ENCODE measurements at regions of chr16 and their contacts with region 1.

Region 1: DNA sequence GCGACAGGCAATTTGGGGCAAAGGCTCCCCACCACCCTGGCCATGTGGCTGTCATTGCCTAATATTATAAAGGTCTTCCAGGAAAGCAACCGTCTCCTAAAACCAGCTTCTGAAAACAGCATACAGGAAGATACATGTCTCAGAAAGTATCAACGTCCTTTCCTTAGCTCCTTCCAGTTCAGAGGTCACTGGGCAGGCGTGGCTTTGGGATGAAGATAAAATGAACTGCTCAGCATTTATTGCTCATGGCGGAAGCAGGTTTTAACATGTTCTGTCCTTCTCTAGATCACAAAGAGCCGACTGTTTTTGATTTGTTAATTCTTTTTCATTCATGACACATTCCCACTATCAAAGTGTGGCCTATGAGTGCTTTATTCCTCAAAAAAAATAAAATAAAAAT is 8.0 kb downstream of the CFAP20 start:
- DNase-seq: no peak
- H3K4me3 Mint-ChIP-seq: no peak overlapping the region
- H3K27ac Mint-ChIP-seq: no peak overlapping the region
- H3K4me1 Mint-ChIP-seq: peaks cover 56% of the 10 kb centered on the region
- H3K27me3 Mint-ChIP-seq: no peaks in the 10 kb centered on the region
- CTCF ChIP-seq: no peak

Region 2: GRCh38 chr16:57966133-57966805 is 154.9 kb before region 1 on chr16:
- CTCF ChIA-PET with region 1: no interaction called
- intact Hi-C with region 1: no loop called
- DNase-seq: no peak
- H3K4me3 Mint-ChIP-seq: no peak overlapping the region
- H3K27ac Mint-ChIP-seq: no peak overlapping the region
- H3K4me1 Mint-ChIP-seq: no peaks in the 10 kb centered on the region
- H3K27me3 Mint-ChIP-seq: peaks cover 63% of the 10 kb centered on the region
- CTCF ChIP-seq: no peak

Region 3: DNA sequence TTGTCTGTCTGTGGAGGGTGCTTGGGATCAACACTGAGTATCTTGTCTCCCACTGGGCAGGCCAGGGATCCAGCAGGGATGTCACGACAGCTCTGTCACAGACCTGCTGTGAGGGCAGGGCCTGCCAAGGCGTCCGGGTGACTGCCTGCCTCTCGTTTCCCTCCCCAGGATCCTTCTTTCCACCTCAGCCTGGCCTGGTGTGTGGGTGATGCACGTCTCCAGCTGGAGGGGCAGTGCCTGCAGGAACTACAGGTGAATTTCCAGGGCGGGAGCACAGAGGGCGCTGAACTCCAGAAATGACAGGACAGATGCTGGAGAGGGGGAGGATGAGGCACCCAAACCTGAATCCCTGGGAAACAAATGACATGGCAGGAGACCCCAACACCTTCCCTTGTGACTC is 102.3 kb before region 1 on chr16:
- CTCF ChIA-PET with region 1: interaction called, 41 read pairs
- intact Hi-C with region 1: loop called (anchors 1 kb)
- DNase-seq: no peak
- H3K4me3 Mint-ChIP-seq: no peak overlapping the region
- H3K27ac Mint-ChIP-seq: no peak overlapping the region
- H3K4me1 Mint-ChIP-seq: peaks cover 23% of the 10 kb centered on the region
- H3K27me3 Mint-ChIP-seq: no peaks in the 10 kb centered on the region
- CTCF ChIP-seq: peak; percentile 11

Region 4: DNA sequence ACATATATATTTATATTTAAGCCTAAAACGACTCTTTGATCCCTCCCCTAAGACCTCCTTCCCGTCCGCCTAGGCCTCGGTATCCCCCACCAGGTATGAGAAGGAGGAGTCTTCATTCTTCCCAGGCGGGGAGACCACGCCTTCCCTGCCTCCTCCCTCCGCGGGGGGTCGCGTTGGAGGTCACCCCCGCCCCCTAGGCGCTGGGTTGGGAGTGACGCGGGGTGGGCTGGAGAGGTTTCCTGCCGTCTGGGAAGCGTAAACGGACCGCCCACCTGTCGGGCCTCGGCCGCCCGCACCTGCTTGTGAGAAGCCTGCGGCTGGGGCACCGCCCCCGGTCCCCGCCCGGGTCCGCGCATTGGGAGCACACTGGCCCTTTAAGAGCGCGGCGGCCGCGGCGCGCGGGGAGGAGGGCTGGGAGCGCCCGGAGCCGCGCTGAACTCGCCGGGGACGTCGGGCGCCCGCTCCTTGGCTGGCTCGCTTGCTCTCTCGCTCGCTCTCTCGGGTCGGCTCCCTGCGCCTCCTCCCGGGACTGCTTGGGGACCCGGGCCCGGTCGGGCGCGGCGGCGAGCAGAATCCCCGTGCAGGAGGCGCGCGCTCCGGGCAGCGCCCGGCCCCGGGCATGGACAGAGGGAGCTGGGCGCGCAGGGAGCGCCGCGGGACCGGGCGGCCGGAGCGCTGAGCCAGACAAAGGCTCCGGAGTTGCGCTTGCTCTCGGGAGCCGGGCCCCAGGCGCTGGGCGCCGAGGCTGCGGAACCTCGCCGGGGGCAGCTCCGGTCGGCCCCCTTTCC is 95.6 kb before region 1 on chr16 and contains the start of gene MMP15:
- CTCF ChIA-PET with region 1: interaction called, 41 read pairs
- intact Hi-C with region 1: loop called (anchors 1 kb)
- DNase-seq: peak; percentile 97
- H3K4me3 Mint-ChIP-seq: peak within 1 kb of the TSS; percentile 79
- H3K27ac Mint-ChIP-seq: peak within 1 kb of the TSS; percentile 88
- H3K4me1 Mint-ChIP-seq: peaks cover 67% of the 10 kb centered on the region
- H3K27me3 Mint-ChIP-seq: no peaks in the 10 kb centered on the region
- CTCF ChIP-seq: no peak
- total RNA-seq, gene MMP15: 81.4 and 93.7 TPM in 2 replicates

Region 5: DNA sequence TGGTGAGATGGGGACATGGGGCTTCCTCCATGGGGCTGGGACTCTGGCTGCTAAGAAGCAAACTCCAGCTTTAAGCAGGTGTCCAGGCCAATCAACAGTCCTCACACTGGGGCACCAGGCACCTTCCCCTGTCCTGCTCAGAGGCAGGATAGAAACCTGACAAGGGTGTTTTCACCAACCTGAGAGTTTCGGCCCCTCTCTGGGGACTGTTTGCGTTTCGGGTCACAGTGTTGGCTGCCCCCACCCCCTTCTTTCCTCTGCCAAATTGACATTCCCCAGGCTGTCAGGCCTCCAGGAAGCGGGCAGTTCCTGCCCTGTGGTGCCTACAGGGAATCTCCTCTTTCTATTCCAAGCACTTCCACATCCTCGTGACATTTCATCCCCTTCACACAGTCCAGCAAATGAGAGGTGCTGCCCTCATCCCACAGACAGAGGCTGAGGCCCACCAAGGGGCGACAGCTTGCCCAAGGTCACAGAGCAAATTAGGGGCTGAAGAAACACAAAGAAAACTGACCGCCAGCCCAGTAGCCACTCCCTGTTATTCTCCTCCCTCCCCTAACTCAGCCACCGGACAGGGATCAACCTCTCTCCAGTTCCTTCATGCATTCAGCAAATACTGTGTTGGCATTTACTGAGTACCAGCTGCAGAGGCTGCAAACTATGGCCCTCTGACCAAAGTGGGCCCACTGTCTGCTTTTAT is 57.6 kb before region 1 on chr16:
- CTCF ChIA-PET with region 1: no interaction called
- intact Hi-C with region 1: no loop called
- DNase-seq: no peak
- H3K4me3 Mint-ChIP-seq: no peak overlapping the region
- H3K27ac Mint-ChIP-seq: no peak overlapping the region
- H3K4me1 Mint-ChIP-seq: peaks cover 8% of the 10 kb centered on the region
- H3K27me3 Mint-ChIP-seq: no peaks in the 10 kb centered on the region
- CTCF ChIP-seq: no peak

Region 6: GRCh38 chr16:58931436-58931835 is 810.3 kb after region 1 on chr16:
- CTCF ChIA-PET with region 1: no interaction called
- intact Hi-C with region 1: no loop called
- DNase-seq: no peak
- H3K4me3 Mint-ChIP-seq: no peak overlapping the region
- H3K27ac Mint-ChIP-seq: no peak overlapping the region
- H3K4me1 Mint-ChIP-seq: no peaks in the 10 kb centered on the region
- H3K27me3 Mint-ChIP-seq: no peaks in the 10 kb centered on the region
- CTCF ChIP-seq: no peak

Measured in Calu3 (cell line).